ENCODE measurements at regions of chr7 and their contacts with region 1.

Region 1: GRCh38 chr7:142782922-142783900 is 12.4 kb downstream of the PRSS2 start:
- DNase-seq: peak; percentile 90 to 91
- H3K4me3 ChIP-seq: no peak overlapping the region
- H3K4me3 Mint-ChIP-seq: peak overlapping the region; percentile 63
- H3K27ac Mint-ChIP-seq: no peak overlapping the region
- H3K4me1 ChIP-seq: no peaks in the 10 kb centered on the region
- H3K4me1 Mint-ChIP-seq: peaks cover 16% of the 10 kb centered on the region
- H3K27me3 ChIP-seq: no peaks in the 10 kb centered on the region
- H3K27me3 Mint-ChIP-seq: peaks cover 10% of the 10 kb centered on the region
- CTCF ChIP-seq: peak; percentile 98

Region 2: GRCh38 chr7:142535123-142535779 is 248.0 kb before region 1 on chr7:
- CTCF ChIA-PET with region 1: interaction called, 16 read pairs
- POLR2A ChIA-PET with region 1: no interaction called
- intact Hi-C with region 1: loop called (anchors 10 kb)
- DNase-seq: peak; percentile 63 to 66
- H3K4me3 ChIP-seq: no peak overlapping the region
- H3K4me3 Mint-ChIP-seq: no peak overlapping the region
- H3K27ac Mint-ChIP-seq: no peak overlapping the region
- H3K4me1 ChIP-seq: no peaks in the 10 kb centered on the region
- H3K4me1 Mint-ChIP-seq: no peaks in the 10 kb centered on the region
- H3K27me3 ChIP-seq: no peaks in the 10 kb centered on the region
- H3K27me3 Mint-ChIP-seq: peaks cover 16% of the 10 kb centered on the region
- CTCF ChIP-seq: peak; percentile 73 to 82

Region 3: GRCh38 chr7:142603870-142604448 is 179.3 kb before region 1 on chr7:
- CTCF ChIA-PET with region 1: interaction called, 23 read pairs
- POLR2A ChIA-PET with region 1: no interaction called
- intact Hi-C with region 1: loop called (anchors 1 kb)
- DNase-seq: peak; percentile 52 to 65
- H3K4me3 ChIP-seq: no peak overlapping the region
- H3K4me3 Mint-ChIP-seq: no peak overlapping the region
- H3K27ac Mint-ChIP-seq: no peak overlapping the region
- H3K4me1 ChIP-seq: no peaks in the 10 kb centered on the region
- H3K4me1 Mint-ChIP-seq: peaks cover 6% of the 10 kb centered on the region
- H3K27me3 ChIP-seq: no peaks in the 10 kb centered on the region
- H3K27me3 Mint-ChIP-seq: peaks cover 23% of the 10 kb centered on the region
- CTCF ChIP-seq: peak; percentile 79 to 93

Region 4: GRCh38 chr7:142669074-142669654 is 114.0 kb before region 1 on chr7:
- CTCF ChIA-PET with region 1: interaction called, 19 read pairs
- POLR2A ChIA-PET with region 1: no interaction called
- intact Hi-C with region 1: loop called (anchors 1 kb)
- DNase-seq: peak in 1 of 2 experiments; percentile 5
- H3K4me3 ChIP-seq: no peak overlapping the region
- H3K4me3 Mint-ChIP-seq: no peak overlapping the region
- H3K27ac Mint-ChIP-seq: no peak overlapping the region
- H3K4me1 ChIP-seq: no peaks in the 10 kb centered on the region
- H3K4me1 Mint-ChIP-seq: no peaks in the 10 kb centered on the region
- H3K27me3 ChIP-seq: no peaks in the 10 kb centered on the region
- H3K27me3 Mint-ChIP-seq: peaks cover 11% of the 10 kb centered on the region
- CTCF ChIP-seq: peak; percentile 7 to 27

Region 5: GRCh38 chr7:142711746-142712619 is 71.2 kb before region 1 on chr7:
- CTCF ChIA-PET with region 1: interaction called, 58 read pairs
- POLR2A ChIA-PET with region 1: no interaction called
- intact Hi-C with region 1: loop called (anchors 1 kb)
- DNase-seq: peak in 1 of 2 experiments; percentile 33
- H3K4me3 ChIP-seq: no peak overlapping the region
- H3K4me3 Mint-ChIP-seq: no peak overlapping the region
- H3K27ac Mint-ChIP-seq: no peak overlapping the region
- H3K4me1 ChIP-seq: no peaks in the 10 kb centered on the region
- H3K4me1 Mint-ChIP-seq: no peaks in the 10 kb centered on the region
- H3K27me3 ChIP-seq: no peaks in the 10 kb centered on the region; the same call in 1 of the 2 replicates
- H3K27me3 Mint-ChIP-seq: peaks cover 13% of the 10 kb centered on the region
- CTCF ChIP-seq: peak; percentile 47 to 67

Region 6: GRCh38 chr7:142760071-142760642 is 23.1 kb before region 1 on chr7:
- CTCF ChIA-PET with region 1: interaction called, 10 read pairs
- POLR2A ChIA-PET with region 1: interaction called, 11 read pairs
- intact Hi-C with region 1: no loop called
- DNase-seq: peak; percentile 83 to 84
- H3K4me3 ChIP-seq: no peak overlapping the region
- H3K4me3 Mint-ChIP-seq: peak overlapping the region; percentile 17
- H3K27ac Mint-ChIP-seq: peak overlapping the region; percentile 94
- H3K4me1 ChIP-seq: peaks cover 12% of the 10 kb centered on the region
- H3K4me1 Mint-ChIP-seq: peaks cover 18% of the 10 kb centered on the region
- H3K27me3 ChIP-seq: no peaks in the 10 kb centered on the region
- H3K27me3 Mint-ChIP-seq: no peaks in the 10 kb centered on the region
- CTCF ChIP-seq: no peak